Endothelial cell of umbilical vein (primary cell): ENCODE measurements at regions of chr7 and their contacts with region 1.

Region 1: DNA sequence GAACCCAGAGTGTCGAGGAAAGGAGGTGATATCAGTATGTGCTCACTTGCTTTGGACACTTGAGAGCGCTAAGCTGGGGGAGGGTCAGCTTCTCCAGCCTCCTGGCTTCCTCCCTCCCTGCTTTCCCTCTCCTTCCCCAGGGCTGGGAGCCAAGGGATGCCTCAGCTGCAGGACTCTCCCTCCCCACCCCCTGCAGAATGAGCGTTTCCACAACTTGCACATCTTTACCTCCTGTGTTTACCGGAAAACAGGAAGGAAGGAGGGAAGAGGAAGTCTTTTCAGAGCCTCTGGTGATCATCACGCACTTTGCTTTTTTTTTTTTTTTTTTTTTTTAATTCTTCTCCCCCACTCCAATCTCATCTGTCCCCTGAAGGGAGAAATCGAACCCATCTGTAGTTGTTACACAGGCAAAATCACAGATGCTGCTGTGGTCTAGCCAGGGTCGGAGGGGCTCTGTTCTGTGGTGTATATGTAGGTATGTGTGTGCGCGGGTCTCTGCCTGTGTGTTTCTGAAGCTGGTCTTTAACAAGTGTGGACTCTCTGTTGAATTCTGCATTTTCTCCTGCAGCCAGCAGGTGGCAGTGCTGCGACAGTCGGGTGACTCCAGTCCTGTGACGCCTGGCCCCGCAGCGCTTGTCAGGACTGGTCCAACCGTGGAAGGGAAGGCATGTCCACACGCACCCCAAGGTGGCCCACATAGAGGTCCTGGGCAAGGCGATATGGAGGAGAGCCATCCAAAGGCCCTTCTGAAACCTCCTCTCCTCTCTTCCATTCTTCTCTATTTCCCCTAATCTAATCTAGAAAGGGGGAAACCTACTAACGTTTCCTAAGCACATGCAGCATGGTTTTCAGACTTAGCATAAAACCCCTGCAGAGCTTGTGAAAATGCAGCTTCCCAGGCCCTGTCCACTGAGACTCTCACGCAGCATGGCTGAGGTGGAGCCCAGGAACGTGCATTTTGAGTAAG is 257.6 kb downstream of the PLXNA4 start:
- DNase-seq: peak; percentile 91
- H3K4me3 ChIP-seq: no peak overlapping the region
- H3K27ac ChIP-seq: no peak overlapping the region
- H3K4me1 ChIP-seq: peaks cover 22% of the 10 kb centered on the region
- H3K27me3 ChIP-seq: no peaks in the 10 kb centered on the region
- CTCF ChIP-seq: peak; percentile 84 to 89
- POLR2A ChIP-seq: no peak

Region 2: DNA sequence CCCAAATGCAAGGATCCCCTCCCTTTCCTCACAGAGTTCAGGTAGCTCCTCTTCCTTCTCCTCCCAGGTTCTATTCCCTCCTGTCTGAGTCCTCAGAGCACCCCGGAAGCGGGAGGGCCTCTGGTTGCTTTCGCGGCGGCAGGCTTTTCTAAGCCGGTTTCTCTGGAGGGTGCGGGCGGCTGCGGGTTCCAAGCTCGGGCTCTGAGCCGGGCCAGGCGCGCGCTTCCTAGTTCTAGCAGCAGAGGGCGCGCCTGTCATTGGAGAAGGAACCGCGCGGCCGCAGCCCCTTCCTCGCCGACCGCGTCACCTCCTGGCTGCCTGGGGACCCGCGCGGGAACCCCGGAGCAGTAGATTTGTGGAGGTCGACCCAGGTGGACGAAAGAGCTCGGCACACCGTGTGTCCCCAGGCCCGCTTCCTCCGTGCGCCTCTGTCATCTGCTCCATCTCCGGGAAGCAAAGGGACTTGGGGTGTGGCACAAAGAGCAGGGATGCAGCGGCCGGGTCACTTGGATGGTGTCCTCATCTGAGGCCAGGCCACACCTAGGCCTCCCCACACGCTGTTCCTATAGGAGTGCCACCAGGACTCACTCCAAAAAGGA is 373.2 kb before region 1 on chr7:
- CTCF ChIA-PET with region 1: interaction called, 12 read pairs
- POLR2A ChIA-PET with region 1: no interaction called
- dilution Hi-C with region 1: no loop called
- intact Hi-C with region 1: loop called (anchors 1 kb)
- DNase-seq: peak; percentile 46
- H3K4me3 ChIP-seq: no peak overlapping the region
- H3K27ac ChIP-seq: no peak overlapping the region
- H3K4me1 ChIP-seq: peaks cover 9% of the 10 kb centered on the region
- H3K27me3 ChIP-seq: peaks cover 8 to 19% of the 10 kb centered on the region in 2 experiments
- CTCF ChIP-seq: peak; percentile 89 to 93
- POLR2A ChIP-seq: no peak

Region 3: GRCh38 chr7:132255898-132256297 is 62.7 kb before region 1 on chr7:
- CTCF ChIA-PET with region 1: no interaction called
- POLR2A ChIA-PET with region 1: no interaction called
- dilution Hi-C with region 1: no loop called
- intact Hi-C with region 1: no loop called
- DNase-seq: peak; percentile 78
- H3K4me3 ChIP-seq: no peak overlapping the region
- H3K27ac ChIP-seq: no peak overlapping the region
- H3K4me1 ChIP-seq: peaks cover 11% of the 10 kb centered on the region
- H3K27me3 ChIP-seq: no peaks in the 10 kb centered on the region
- CTCF ChIP-seq: no peak
- POLR2A ChIP-seq: no peak

Region 4: DNA sequence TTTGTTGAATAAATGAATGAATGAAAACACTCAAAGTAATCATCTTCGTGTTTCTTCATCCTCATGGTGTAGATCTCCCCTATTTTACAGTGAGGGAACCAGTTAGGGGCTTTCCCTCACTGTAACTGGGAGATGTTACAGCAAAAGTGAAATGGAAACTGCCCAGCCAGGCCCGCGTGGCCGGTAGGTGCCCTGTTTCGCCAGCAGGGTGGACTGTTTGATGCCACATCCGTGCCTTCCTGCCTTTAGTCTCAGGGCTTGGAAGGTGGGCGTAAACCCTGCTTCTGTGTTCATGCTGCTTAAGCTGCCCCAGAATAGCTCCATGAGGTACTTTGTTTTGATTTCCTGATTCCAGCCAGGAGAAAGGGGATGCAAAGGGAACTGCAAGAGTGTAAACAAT is 11.2 kb before region 1 on chr7:
- CTCF ChIA-PET with region 1: interaction called, 13 read pairs
- POLR2A ChIA-PET with region 1: no interaction called
- dilution Hi-C with region 1: no loop called
- intact Hi-C with region 1: no loop called
- DNase-seq: peak; percentile 15
- H3K4me3 ChIP-seq: no peak overlapping the region
- H3K27ac ChIP-seq: no peak overlapping the region
- H3K4me1 ChIP-seq: peaks cover 7% of the 10 kb centered on the region
- H3K27me3 ChIP-seq: no peaks in the 10 kb centered on the region
- CTCF ChIP-seq: peak in 1 of 2 donors; percentile 31
- POLR2A ChIP-seq: no peak

Region 5: DNA sequence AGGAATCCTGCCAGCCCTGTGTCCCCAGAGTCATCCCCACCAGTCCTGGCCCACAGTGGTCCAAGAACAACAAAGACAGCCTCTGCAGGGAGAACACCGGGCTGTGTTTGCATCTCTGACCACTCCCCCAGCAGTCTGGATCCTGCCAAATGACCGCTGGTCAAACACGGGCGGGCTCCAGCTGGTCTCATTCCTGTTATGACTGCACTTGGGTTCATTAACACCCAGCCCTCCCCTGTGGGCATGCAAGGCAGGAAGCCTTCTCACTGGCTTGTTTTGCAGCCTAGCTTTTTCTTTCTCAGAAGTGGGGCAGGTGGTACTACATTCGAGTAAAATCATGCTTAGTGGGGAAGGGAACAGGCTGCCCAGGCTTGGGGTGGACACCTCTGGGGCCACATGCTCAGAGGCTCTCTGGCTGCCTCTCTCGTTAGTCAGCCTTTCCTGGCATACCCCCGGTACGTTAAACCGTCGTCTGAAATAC is 67.6 kb after region 1 on chr7:
- CTCF ChIA-PET with region 1: interaction called, 13 read pairs
- POLR2A ChIA-PET with region 1: no interaction called
- dilution Hi-C with region 1: no loop called
- intact Hi-C with region 1: loop called (anchors 2 kb)
- DNase-seq: peak; percentile 97
- H3K4me3 ChIP-seq: no peak overlapping the region
- H3K27ac ChIP-seq: peak overlapping the region; percentile 10
- H3K4me1 ChIP-seq: peaks cover 21% of the 10 kb centered on the region
- H3K27me3 ChIP-seq: no peaks in the 10 kb centered on the region
- CTCF ChIP-seq: no peak
- POLR2A ChIP-seq: no peak

Region 6: DNA sequence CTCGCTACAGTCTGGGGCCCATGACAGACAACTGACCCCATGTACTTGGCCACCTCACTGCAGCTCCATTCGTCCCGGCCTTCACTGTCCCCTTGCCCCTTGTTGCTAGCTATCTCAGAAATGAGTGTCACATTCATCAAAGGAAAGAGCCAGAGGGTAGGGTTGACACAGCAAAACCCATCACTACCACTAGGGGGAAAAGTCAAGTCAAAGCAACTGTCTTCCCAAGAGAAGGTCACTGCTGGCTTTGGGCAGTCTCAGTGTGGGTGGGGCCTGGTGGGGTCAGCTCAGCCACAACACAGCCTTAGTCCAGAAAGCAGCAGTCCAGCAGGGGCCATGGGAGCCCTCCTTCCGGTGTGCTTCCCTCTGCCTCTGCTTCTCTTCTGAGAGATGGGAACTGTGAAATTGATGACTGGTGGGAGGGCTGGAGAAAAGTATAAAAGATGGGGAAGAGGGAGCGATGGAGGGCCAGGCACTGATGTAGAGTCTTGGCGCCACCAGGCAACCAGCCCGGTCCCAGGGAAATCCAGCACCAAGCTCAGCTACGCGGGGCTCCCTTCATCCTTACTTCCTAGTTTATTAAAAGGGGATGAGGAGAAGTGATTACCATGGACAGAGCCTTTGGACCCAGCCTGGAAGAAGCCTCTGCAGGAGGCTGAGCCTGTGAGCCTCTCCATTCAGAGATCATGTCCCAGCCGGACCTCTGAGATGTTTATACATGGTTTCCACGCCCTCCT is 199.6 kb after region 1 on chr7:
- CTCF ChIA-PET with region 1: interaction called, 10 read pairs
- POLR2A ChIA-PET with region 1: no interaction called
- dilution Hi-C with region 1: no loop called
- intact Hi-C with region 1: no loop called
- DNase-seq: peak; percentile 14
- H3K4me3 ChIP-seq: no peak overlapping the region
- H3K27ac ChIP-seq: no peak overlapping the region
- H3K4me1 ChIP-seq: no peaks in the 10 kb centered on the region
- H3K27me3 ChIP-seq: no peaks in the 10 kb centered on the region
- CTCF ChIP-seq: peak; percentile 45 to 48
- POLR2A ChIP-seq: no peak

Region 7: GRCh38 chr7:132557489-132558044 is 238.9 kb after region 1 on chr7:
- CTCF ChIA-PET with region 1: interaction called, 42 read pairs
- POLR2A ChIA-PET with region 1: no interaction called
- dilution Hi-C with region 1: no loop called
- intact Hi-C with region 1: loop called (anchors 1 kb)
- DNase-seq: peak; percentile 31
- H3K4me3 ChIP-seq: no peak overlapping the region
- H3K27ac ChIP-seq: no peak overlapping the region
- H3K4me1 ChIP-seq: no peaks in the 10 kb centered on the region
- H3K27me3 ChIP-seq: no peaks in the 10 kb centered on the region
- CTCF ChIP-seq: no peak
- POLR2A ChIP-seq: no peak

Region 8: DNA sequence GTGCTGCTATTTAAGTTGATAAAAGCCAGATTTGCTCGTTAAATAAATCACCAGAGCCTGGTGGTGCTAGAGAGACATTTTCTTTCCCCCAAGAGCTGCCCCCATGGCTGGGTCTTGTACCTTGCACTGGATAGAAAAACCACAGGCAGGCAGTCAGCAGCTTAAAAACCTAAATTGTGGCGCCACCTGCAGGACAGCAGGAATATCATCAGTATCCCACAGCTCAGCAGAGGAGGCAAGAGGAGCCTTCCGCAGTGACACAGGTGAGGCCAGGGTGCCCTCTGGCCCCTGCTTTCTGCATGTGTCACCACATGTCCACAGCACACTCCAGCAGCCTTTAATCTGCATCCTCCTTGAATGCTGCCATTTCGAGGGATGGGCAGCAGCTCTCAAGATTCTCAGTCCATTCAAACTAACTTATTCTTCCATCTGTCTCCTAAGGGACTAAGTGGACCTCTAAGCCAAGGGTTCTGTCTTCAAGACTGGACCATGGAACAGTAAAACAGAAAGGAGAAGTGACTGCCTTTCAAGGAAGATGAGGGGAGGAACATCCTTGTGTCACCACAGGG is 262.2 kb after region 1 on chr7:
- CTCF ChIA-PET with region 1: interaction called, 268 read pairs
- POLR2A ChIA-PET with region 1: interaction called, 4 read pairs
- dilution Hi-C with region 1: no loop called
- intact Hi-C with region 1: loop called (anchors 1 kb)
- DNase-seq: peak; percentile 78
- H3K4me3 ChIP-seq: no peak overlapping the region
- H3K27ac ChIP-seq: no peak overlapping the region
- H3K4me1 ChIP-seq: peaks cover 7% of the 10 kb centered on the region
- H3K27me3 ChIP-seq: no peaks in the 10 kb centered on the region
- CTCF ChIP-seq: peak; percentile 59 to 76
- POLR2A ChIP-seq: no peak